Caco-2 (cell line): ENCODE measurements at regions of chr7 and their contacts with region 1.

Region 1: DNA sequence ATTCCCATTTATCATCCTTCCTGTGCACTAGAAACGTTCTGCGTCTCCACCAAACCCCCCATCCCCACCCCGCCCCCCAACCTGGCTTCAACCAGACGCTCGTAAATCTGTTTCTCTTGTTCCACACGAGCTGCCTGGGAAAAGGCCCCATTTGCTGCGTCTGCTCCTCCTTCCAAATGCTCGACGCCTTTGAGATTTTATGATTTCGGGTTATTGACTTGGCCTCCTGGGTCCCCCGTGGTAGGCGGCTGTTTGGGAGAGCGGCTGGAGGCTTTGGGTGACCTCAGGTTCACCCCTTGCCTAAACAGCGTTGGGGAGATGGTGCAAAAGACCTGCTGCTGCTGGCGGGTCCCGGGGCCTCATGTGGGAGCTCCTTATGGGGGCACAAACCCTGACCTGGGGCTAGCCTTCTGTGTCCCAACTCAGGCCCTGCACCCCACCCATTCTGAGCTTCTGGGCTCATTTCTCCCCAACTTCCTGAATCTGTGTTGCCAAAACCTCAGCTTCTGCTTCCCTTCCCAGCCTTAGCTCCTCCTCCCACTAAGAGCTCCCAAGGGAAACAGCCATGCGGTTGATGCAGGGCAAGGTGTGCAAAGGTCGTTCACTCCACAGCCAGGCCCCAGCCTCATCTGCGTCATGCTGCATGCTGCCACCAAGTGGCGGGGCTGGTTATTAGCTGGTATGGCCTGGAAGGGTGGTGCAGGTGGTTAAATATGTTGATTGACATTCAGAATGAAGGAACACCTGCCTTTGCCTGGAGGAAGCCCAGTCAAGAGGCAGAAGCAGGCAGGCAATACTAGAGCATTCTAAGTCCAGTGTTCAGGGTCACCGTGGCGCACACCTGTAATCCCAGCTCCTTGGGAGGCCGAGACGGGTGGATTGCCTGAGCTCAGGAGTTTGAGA is 49.1 kb upstream of the ELN start:
- DNase-seq: peak; percentile 92 to 94
- H3K4me3 ChIP-seq: no peak overlapping the region
- H3K4me3 Mint-ChIP-seq: no peak overlapping the region
- H3K27ac Mint-ChIP-seq: peak overlapping the region; percentile 68
- H3K4me1 ChIP-seq: peaks cover 15% of the 10 kb centered on the region
- H3K4me1 Mint-ChIP-seq: peaks cover 13% of the 10 kb centered on the region
- H3K27me3 ChIP-seq: no peaks in the 10 kb centered on the region
- H3K27me3 Mint-ChIP-seq: no peaks in the 10 kb centered on the region
- CTCF ChIP-seq: peak; percentile 61 to 66

Region 2: GRCh38 chr7:73690646-73691045 is 288.3 kb before region 1 on chr7:
- CTCF ChIA-PET with region 1: no interaction called
- POLR2A ChIA-PET with region 1: no interaction called
- intact Hi-C with region 1: no loop called
- DNase-seq: no peak
- H3K4me3 ChIP-seq: no peak overlapping the region
- H3K4me3 Mint-ChIP-seq: no peak overlapping the region
- H3K27ac Mint-ChIP-seq: no peak overlapping the region
- H3K4me1 ChIP-seq: no peaks in the 10 kb centered on the region
- H3K4me1 Mint-ChIP-seq: no peaks in the 10 kb centered on the region
- H3K27me3 ChIP-seq: no peaks in the 10 kb centered on the region
- H3K27me3 Mint-ChIP-seq: no peaks in the 10 kb centered on the region
- CTCF ChIP-seq: no peak

Region 3: DNA sequence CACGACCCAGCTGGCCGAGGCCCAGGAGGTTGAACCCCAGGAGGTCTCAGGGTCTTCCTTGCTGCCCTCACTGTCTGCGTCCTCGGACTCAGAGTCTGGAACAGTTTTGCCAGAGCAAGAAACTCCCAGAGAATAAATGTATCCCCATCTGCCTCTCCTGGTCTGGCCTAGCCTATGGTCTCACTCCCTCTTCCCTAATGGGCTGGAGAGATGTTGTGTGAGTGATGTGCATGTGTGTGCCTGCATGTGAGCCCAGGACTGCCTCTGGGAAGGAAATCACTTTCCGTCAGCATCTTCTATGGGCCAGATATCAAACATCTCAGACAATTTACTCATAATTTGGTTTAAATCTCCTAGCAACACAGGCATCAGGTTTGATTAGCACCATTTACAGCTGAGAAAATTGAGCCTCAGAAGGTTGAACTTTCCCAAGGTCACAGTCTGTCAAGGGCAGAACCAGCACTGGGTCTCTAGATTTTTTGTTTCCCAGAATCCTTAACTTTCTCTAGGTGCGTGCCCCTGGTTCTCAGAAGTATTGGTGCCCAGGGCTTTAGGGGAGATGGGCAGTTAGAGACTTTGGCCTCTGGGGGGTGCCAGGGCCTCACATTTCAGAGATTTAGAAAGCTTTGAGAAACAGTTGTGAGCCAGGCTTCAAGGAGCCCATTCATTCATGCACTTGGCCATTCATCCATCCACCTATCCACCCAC is 113.0 kb before region 1 on chr7:
- CTCF ChIA-PET with region 1: interaction called, 3 read pairs
- POLR2A ChIA-PET with region 1: interaction called, 4 read pairs
- intact Hi-C with region 1: loop called (anchors 1 kb)
- DNase-seq: peak in 1 of 2 experiments; percentile 53
- H3K4me3 ChIP-seq: no peak overlapping the region
- H3K4me3 Mint-ChIP-seq: no peak overlapping the region
- H3K27ac Mint-ChIP-seq: no peak overlapping the region
- H3K4me1 ChIP-seq: peaks cover 10% of the 10 kb centered on the region
- H3K4me1 Mint-ChIP-seq: no peaks in the 10 kb centered on the region
- H3K27me3 ChIP-seq: no peaks in the 10 kb centered on the region
- H3K27me3 Mint-ChIP-seq: no peaks in the 10 kb centered on the region
- CTCF ChIP-seq: peak; percentile 53 to 68

Region 4: DNA sequence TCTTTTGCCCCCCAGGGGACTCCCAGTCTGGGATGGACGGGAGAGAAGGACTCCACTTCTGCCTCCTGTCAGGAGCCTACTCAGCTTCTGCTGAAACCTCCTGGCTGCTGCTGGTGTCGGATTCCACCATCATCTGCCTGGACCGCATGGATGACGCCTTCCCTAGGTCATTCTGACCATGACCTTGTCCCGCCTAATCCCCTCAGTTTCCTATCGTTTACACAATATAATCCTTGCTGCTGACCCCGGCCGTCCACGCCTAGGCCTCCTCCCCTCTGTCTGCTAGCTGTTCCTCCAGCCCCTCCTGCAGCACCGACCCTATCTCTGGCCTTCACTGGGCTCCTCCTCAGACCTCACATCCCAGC is 87.4 kb before region 1 on chr7:
- CTCF ChIA-PET with region 1: interaction called, 10 read pairs
- POLR2A ChIA-PET with region 1: no interaction called
- intact Hi-C with region 1: loop called (anchors 1 kb)
- DNase-seq: no peak
- H3K4me3 ChIP-seq: no peak overlapping the region
- H3K4me3 Mint-ChIP-seq: no peak overlapping the region
- H3K27ac Mint-ChIP-seq: no peak overlapping the region
- H3K4me1 ChIP-seq: no peaks in the 10 kb centered on the region
- H3K4me1 Mint-ChIP-seq: no peaks in the 10 kb centered on the region
- H3K27me3 ChIP-seq: no peaks in the 10 kb centered on the region
- H3K27me3 Mint-ChIP-seq: no peaks in the 10 kb centered on the region
- CTCF ChIP-seq: no peak